ENCODE measurements at regions of chr18 and their contacts with region 1.

Region 1: GRCh38 chr18:80034068-80034851 is at the start of gene RBFA:
- DNase-seq: peak; percentile 99
- ATAC-seq: peak; percentile 73
- H3K4me3 Mint-ChIP-seq: peak within 1 kb of the TSS; percentile 90
- H3K27ac Mint-ChIP-seq: peak within 1 kb of the TSS; percentile 93
- H3K4me1 Mint-ChIP-seq: peaks cover 24% of the 10 kb centered on the region
- H3K27me3 Mint-ChIP-seq: no peaks in the 10 kb centered on the region
- CTCF ChIP-seq: no peak
- total RNA-seq, gene RBFA: 21.6 and 23.3 TPM in 2 replicates

Region 2: DNA sequence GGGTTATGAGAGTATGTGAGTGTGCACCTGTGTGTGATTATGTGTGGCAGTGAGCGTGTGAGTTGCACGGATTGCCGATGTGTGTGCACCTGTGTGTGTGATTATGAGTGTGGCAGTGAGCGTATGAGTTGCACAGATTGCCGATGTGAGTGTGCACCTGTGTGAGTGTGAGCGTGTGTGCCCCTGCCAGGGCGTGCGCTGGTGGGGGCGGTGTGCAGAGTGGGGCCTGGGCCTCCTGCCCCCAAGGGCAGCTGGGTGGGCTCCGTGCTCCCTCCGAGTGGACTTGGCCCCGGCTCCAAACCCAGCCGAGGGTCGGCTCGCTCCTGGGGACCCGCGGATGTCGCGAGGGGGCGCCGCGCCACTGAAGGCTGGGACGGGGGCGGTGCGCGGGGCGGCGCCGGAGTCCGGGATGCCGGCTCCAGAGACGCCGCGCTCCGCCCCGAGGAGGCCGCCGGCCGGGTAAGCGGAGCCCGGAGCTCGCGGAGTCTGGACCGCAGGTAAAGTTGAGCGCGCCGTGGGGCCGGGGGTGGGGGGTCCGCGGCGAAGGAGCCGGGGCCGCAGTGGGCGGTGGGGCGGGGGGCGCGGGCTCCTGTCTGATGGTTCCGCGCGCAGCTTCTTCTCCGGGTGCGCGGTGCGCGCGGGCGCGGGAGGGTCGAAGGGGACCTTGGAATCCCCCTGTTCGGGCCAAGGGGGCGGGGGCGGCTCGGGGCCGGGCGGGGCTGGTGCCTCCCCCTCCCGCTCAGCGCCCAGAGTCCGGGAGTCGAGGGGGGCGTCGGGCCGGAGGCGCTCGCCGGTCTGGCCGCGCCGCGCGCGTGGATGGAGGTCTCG is 236.5 kb before region 1 on chr18 and contains the start of gene KCNG2:
- CTCF ChIA-PET with region 1: no interaction called
- POLR2A ChIA-PET with region 1: no interaction called
- intact Hi-C with region 1: loop called (anchors 5 kb)
- DNase-seq: peak; percentile 32
- ATAC-seq: peak; percentile 66
- H3K4me3 Mint-ChIP-seq: peak within 1 kb of the TSS; percentile 72
- H3K27ac Mint-ChIP-seq: no peak within 1 kb of the TSS
- H3K4me1 Mint-ChIP-seq: peaks cover 22% of the 10 kb centered on the region
- H3K27me3 Mint-ChIP-seq: peaks cover 25% of the 10 kb centered on the region
- CTCF ChIP-seq: no peak
- total RNA-seq, gene KCNG2: not detected in 2 replicates

Region 3: DNA sequence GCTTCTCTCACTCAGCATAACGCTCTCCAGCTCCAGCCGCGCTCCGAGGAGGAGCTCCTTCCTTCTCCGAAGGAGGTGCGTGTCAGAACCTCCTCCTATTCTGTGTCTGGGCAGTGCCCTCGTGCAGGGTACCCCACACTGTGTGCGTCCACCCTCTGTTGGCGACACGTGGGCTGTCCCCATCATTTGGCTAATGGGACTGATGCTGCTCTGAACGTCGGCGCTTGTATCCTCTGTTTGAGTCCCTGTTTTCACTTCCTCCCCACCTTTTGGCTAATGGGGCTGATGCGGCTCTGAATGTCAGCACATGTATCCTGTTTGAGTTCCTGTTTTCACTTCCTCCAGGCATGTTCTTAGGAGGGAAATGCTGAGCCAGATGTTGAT is 214.3 kb before region 1 on chr18:
- CTCF ChIA-PET with region 1: no interaction called
- POLR2A ChIA-PET with region 1: interaction called, 4 read pairs
- intact Hi-C with region 1: loop called (anchors 10 kb)
- DNase-seq: peak; percentile 42
- ATAC-seq: peak; percentile 94
- H3K4me3 Mint-ChIP-seq: peak overlapping the region; percentile 73
- H3K27ac Mint-ChIP-seq: peak overlapping the region; percentile 84
- H3K4me1 Mint-ChIP-seq: peaks cover 36% of the 10 kb centered on the region
- H3K27me3 Mint-ChIP-seq: peaks cover 3% of the 10 kb centered on the region
- CTCF ChIP-seq: no peak

Region 4: DNA sequence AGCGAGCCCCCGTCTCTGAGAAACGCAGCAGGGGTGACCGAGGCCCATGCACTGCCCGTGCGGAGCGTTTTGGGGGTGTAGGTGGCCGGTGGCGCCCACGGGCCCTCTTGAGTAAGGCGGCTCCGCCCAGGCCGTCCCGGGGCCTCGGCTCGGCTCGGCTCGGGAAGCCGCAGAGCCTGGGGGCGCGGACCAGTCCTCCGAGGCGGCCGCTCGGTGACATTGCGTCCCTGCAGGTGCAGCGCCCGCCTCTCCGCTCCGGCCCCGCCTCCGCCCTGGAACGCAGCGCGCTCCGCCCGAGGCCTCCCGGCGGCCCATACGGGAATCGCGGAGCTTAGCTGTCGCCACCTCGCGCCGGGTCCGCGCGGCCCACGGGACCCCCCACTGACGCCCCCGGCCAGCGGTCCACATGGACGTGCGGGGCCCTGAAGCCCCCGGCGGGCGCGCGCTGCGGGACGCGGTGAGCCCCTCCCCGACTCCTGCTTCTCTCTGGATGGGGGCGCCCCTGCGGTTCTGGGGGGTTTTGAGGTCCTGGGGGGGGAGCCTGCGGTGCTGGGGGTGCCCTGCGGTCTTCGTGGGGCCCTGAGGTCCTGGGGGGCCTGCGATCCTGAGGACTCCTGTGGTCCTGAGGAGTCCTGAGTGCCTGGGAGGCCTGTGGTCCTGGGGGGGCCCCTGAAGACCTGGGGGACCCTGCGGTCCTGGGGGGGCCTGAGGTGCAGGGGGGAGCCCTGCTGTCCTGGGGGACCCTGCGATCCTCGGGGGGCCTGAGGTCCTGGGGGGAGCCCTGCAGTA is 69.7 kb before region 1 on chr18 and contains the start of gene HSBP1L1:
- CTCF ChIA-PET with region 1: no interaction called
- POLR2A ChIA-PET with region 1: interaction called, 7 read pairs
- intact Hi-C with region 1: loop called (anchors 1 kb)
- DNase-seq: peak; percentile 56
- ATAC-seq: peak; percentile 83
- H3K4me3 Mint-ChIP-seq: peak within 1 kb of the TSS; percentile 74
- H3K27ac Mint-ChIP-seq: no peak within 1 kb of the TSS
- H3K4me1 Mint-ChIP-seq: peaks cover 37% of the 10 kb centered on the region
- H3K27me3 Mint-ChIP-seq: peaks cover 2% of the 10 kb centered on the region
- CTCF ChIP-seq: no peak
- total RNA-seq, gene HSBP1L1: 0.98 and 2.5 TPM in 2 replicates

Region 5: GRCh38 chr18:80108728-80109675 is 74.7 kb after region 1 on chr18 and contains the start of gene ADNP2:
- CTCF ChIA-PET with region 1: no interaction called
- POLR2A ChIA-PET with region 1: interaction called, 26 read pairs
- intact Hi-C with region 1: loop called (anchors 1 kb)
- DNase-seq: peak; percentile 63
- ATAC-seq: peak; percentile 66
- H3K4me3 Mint-ChIP-seq: peak within 1 kb of the TSS; percentile 84
- H3K27ac Mint-ChIP-seq: peak within 1 kb of the TSS; percentile 80
- H3K4me1 Mint-ChIP-seq: peaks cover 45% of the 10 kb centered on the region
- H3K27me3 Mint-ChIP-seq: no peaks in the 10 kb centered on the region
- CTCF ChIP-seq: no peak
- total RNA-seq, gene ADNP2: 19.2 and 19.7 TPM in 2 replicates

Region 6: GRCh38 chr18:80147418-80148325 is 113.4 kb after region 1 on chr18:
- CTCF ChIA-PET with region 1: no interaction called
- POLR2A ChIA-PET with region 1: interaction called, 9 read pairs
- intact Hi-C with region 1: loop called (anchors 1 kb)
- DNase-seq: peak; percentile 74
- ATAC-seq: peak; percentile 88
- H3K4me3 Mint-ChIP-seq: peak overlapping the region; percentile 90
- H3K27ac Mint-ChIP-seq: peak overlapping the region; percentile 69
- H3K4me1 Mint-ChIP-seq: peaks cover 20% of the 10 kb centered on the region
- H3K27me3 Mint-ChIP-seq: no peaks in the 10 kb centered on the region
- CTCF ChIP-seq: no peak

Measured in activated B cell treated with CpG ODN at 0.5 μM for 24 hours (primary cell).